ENCODE measurements at regions of chr12 and their contacts with region 1.

Region 1: DNA sequence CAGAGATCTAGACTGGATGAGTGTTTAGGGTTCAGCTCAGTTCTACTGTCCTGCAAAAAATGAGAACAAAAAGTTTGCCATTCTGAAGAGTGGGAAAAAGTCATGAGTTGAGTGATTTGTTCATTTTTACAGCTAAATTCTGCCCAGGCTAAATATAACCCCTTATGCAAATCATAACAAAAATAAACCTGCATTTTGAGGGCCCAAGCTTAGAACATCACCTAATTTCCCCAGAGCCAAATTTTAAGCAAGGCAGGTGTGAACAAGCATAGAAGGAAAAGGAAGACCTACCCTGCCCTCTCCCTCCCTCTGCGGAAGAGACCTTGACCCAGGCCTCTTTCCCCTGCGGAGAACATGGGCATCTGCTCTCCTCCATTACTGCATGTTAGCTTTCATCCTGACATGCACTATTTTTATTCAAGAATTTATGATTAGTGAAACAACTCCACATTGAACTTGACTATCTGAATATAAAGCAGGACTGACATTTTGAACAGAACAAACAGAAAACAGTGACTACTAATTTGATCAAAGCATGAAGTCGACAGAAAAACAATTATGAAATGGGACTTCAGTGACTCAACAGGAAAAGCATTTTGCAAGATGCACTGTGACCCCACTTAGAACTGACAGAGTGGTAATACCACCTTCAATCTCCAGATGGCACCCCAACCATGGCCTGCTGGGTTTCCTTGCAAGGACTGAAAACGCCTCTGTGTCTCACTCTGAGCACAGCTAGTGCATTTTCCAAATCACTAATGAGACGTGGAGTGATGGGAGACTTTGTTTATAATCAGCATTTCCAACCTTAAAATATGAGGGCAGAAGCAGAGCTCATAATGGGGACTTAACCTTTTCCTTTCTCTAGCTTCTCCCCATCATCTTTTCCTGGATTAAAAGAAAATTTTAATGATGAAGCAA is 30.9 kb upstream of the SELPLG start:
- DNase-seq: peak; percentile 84 to 92
- ATAC-seq: peak; percentile 86 to 97
- H3K4me3 ChIP-seq: peak overlapping the region in 1 of 4 donors; percentile 12
- H3K27ac ChIP-seq: peak overlapping the region; percentile 79 to 84 (median 84)
- H3K4me1 ChIP-seq: peaks cover 51 to 57% of the 10 kb centered on the region in 2 donors
- H3K27me3 ChIP-seq: no peaks in the 10 kb centered on the region
- CTCF ChIP-seq: peak; percentile 93 to 98 (median 95)
- POLR2A ChIP-seq: no peak

Region 2: DNA sequence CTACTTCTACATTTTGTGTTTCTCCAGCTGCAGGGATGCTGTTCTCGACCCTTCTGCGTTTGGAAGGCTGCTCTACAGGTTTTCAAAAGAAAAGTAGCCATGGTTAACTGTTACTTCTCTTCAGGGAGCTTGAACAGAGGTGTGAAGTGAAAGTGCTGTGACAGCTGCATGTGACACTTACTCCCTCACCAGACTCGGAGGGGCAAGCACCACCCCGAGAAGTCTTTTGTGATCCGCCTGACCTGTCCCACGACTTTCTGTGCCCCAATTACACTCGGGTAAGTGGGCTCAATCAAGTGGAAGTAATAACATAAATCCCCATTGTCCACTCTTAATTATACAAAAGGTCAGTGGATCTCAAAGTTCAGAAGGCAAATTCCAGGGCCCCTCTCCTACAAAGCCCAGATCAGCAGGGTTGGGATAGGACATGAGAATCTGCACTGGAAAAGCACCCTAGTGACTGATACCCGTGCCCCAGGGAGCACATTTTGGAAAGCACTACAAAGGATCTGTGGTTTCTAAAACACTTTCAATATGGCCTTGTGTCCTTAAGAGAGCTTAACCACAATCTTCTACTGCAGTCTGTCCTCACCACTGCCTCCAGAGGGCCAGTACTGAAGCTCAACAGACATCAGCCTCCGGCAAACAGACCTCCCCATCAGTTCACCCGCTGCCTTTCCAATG is 138.0 kb before region 1 on chr12:
- in situ Hi-C with region 1: no loop called
- intact Hi-C with region 1: no loop called
- DNase-seq: no peak
- ATAC-seq: no peak
- H3K4me3 ChIP-seq: no peak overlapping the region
- H3K27ac ChIP-seq: no peak overlapping the region
- H3K4me1 ChIP-seq: peaks cover 0 to 1% of the 10 kb centered on the region in 2 donors
- H3K27me3 ChIP-seq: no peaks in the 10 kb centered on the region
- CTCF ChIP-seq: no peak
- POLR2A ChIP-seq: no peak

Region 3: DNA sequence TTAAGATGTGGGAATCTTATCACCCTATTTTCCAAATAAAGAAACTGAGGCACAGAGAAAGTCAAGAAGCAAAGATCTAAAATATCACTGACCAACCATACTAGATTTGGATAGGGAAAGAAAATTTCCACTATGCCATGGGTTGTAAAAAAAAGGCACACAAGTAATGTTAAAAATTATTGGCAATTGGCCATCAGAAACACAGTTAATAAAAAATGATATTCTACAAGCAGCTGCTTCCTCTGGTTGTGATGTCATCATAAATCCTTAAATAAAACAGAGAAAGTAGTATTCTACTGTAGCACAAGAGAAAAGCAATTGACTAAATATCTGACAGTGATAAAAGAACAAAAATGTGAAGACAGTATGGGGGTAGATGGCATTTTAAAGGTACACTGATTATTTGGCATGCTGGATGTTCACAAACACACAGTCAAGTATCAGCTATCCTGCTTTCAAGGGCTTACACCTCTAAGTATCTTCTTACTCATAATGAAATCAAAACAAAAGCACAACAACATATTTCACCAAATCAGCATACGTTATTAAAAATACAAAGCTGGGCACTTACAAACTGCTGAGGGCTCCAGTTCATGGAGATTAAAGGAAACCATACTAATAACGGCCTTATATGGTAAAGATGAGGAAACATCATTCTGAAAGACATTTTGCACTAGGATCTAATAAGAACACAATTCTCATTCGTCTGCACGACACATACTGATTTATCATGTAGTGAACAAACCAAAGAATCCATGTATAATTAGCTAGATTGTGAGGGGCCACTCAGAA is 21.1 kb after region 1 on chr12:
- in situ Hi-C with region 1: no loop called
- intact Hi-C with region 1: loop called (anchors 2 kb)
- DNase-seq: no peak
- ATAC-seq: no peak
- H3K4me3 ChIP-seq: no peak overlapping the region
- H3K27ac ChIP-seq: peak overlapping the region; percentile 92 to 98 (median 96)
- H3K4me1 ChIP-seq: peaks cover 83 to 88% of the 10 kb centered on the region in 2 donors
- H3K27me3 ChIP-seq: no peaks in the 10 kb centered on the region
- CTCF ChIP-seq: no peak
- POLR2A ChIP-seq: no peak

Region 4: DNA sequence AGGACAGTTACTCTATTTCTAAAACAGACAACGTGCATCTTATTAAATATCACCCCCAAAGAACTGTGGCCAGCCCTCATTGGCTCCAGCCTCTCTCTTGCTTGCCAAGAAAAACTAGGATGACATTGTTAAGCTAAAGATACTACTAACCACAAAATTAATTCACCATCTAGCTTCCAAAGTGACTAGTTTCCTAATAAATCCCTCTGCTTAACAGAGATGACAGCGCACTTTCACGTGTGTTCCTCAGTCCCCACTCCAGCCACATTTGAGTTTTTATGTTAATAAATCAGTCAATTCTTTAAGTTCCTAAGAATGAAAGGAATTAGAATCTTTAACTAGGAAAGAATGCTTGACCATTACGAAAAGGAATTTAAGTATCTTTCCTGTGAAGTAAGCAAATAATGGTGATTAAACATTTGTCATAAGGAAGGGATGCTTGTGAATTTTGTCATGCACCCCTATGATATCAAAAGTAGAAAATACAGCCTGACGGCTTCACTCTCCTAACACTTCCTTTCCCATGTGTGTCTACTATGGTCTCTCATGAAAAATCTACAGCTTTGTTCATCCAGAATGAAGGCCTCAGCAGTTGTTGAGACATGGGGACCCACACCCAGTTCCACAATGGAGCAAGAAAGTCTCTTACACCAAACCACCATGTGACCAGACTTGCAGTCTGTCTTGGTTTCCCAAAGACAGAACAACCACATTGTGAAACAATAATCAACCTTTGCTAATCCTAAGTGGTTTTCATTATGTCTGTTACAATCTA is 58.6 kb after region 1 on chr12:
- in situ Hi-C with region 1: loop called in 1 of 4 experiments (anchors 10 kb)
- intact Hi-C with region 1: no loop called
- DNase-seq: peak in 1 of 2 donors; percentile 64
- ATAC-seq: peak; percentile 61 to 85
- H3K4me3 ChIP-seq: peak overlapping the region in 2 of 4 donors; percentile 7 to 12
- H3K27ac ChIP-seq: peak overlapping the region; percentile 85 to 100 (median 98)
- H3K4me1 ChIP-seq: peaks cover 72 to 86% of the 10 kb centered on the region in 2 donors
- H3K27me3 ChIP-seq: no peaks in the 10 kb centered on the region
- CTCF ChIP-seq: no peak
- POLR2A ChIP-seq: peak in 1 of 2 donors; percentile 12

Region 5: DNA sequence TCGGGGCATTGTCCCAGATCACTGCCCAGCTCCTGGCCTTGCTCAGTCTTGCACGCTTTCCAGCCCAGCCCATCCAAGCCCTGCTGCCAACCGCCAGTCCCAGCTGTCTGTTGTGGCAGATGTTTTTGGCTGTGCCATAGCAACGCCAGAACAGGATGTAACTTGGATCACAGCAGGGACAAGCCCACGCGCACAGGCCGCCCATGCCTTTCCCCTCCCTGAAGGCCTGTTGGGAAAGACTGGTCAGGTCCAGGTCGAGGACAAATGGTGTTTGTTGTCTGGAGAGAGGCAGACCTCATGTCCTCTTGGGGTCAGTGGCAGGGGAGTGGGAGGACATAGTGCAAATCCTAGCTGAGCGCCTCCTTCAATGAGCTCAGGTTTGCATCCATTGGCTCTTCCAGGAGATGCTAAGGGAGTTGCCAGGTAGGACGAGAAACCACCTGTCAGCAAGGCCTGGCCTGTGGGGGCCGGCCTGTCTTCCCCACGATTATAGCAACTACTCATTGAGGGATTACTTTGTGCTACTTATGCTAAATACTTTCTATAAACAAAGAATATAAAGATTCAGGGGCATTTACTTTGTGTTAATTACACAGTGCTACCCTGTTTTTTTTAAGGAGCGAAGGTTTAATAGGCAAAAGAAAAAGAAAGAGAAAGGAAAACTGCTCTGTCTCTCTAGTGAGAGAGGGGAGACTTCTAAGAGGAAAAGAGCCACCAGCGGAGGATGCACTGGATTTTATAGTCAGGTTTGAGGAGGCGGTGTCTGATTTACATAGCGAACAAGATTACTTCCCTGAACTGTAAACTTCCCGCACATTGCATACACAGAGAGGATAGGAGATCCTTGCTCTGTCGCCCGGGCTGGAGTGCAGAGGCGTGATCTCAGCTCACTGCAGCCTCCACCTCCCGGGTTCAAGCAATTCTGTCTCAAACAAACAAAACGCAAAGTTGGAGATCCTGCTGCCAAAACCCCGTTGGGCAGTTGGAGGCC is 109.5 kb after region 1 on chr12:
- in situ Hi-C with region 1: no loop called
- intact Hi-C with region 1: no loop called
- DNase-seq: peak; percentile 88 to 94
- ATAC-seq: peak; percentile 86 to 90
- H3K4me3 ChIP-seq: no peak overlapping the region
- H3K27ac ChIP-seq: peak overlapping the region; percentile 80 to 86 (median 84)
- H3K4me1 ChIP-seq: peaks cover 36 to 45% of the 10 kb centered on the region in 2 donors
- H3K27me3 ChIP-seq: no peaks in the 10 kb centered on the region
- CTCF ChIP-seq: no peak
- POLR2A ChIP-seq: peak; percentile 8 to 27

Region 6: GRCh38 chr12:108803428-108804105 is 139.0 kb after region 1 on chr12:
- in situ Hi-C with region 1: loop called (anchors 5 to 10 kb)
- intact Hi-C with region 1: loop called (anchors 1 kb)
- DNase-seq: peak; percentile 69 to 80
- ATAC-seq: peak; percentile 61 to 70
- H3K4me3 ChIP-seq: peak overlapping the region in 1 of 4 donors; percentile 11
- H3K27ac ChIP-seq: peak overlapping the region; percentile 93 to 97 (median 96)
- H3K4me1 ChIP-seq: peaks cover 62% of the 10 kb centered on the region in 2 donors
- H3K27me3 ChIP-seq: no peaks in the 10 kb centered on the region
- CTCF ChIP-seq: peak; percentile 93 to 97 (median 95)
- POLR2A ChIP-seq: peak in 1 of 2 donors; percentile 11

Region 7: DNA sequence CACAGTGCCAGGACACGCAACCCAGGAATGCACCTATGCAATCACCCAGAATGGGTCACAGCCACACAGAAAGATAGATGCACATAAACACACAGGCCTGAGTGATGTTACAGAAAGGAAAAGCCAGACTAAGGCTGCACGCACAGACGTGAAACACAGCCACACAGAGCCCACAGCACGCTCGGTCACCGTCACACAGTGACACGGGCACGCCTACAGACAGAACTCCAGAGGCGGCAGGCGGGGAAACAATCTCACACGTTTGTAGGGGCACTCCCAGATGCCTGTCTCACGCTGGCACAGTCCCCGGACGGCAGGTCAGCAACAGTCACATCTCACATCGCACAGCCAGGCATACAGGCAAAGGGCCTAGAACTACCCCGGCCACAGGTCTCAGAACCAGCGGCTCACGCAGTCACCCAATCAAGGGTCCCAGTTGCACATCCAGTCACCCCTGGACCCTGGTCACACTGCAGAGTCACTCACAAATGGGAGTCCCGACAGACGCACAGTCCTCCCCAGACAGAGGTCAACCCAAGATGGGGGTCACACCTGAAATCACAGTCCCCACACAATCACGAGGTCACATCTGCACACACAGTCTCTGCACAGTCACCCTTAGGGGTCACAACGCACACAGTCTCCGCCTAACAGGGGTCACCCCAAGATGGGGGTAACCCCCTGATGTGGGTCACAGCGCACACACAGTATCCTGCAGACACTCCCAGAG is 192.0 kb after region 1 on chr12:
- in situ Hi-C with region 1: loop called in 1 of 4 experiments (anchors 10 kb)
- intact Hi-C with region 1: loop called (anchors 1 kb)
- DNase-seq: peak; percentile 70 to 91
- ATAC-seq: peak; percentile 28 to 39
- H3K4me3 ChIP-seq: peak overlapping the region; percentile 64 to 97 (median 86)
- H3K27ac ChIP-seq: peak overlapping the region; percentile 90 to 98 (median 96)
- H3K4me1 ChIP-seq: peaks cover 52 to 61% of the 10 kb centered on the region in 2 donors
- H3K27me3 ChIP-seq: no peaks in the 10 kb centered on the region
- CTCF ChIP-seq: no peak
- POLR2A ChIP-seq: peak; percentile 48 to 58

Region 8: DNA sequence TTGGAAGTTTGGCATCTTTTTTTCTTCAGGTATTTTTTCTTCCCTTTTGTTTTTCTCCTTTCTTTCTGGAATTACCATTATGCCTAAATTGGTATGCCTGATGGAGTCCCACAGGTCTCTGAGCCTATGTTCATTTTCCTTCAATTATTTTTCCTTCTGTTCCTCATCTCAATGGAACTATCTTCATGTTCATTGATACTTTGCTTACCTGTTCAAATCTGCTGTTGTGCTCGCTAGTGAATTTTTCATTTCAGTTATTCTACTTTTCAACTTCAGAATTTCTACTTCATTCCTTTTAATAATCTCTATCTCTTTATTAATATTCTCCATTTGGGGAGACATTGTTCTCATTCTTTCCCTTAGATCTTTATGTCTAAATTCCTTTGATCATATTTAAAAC is 372.4 kb after region 1 on chr12:
- in situ Hi-C with region 1: no loop called
- intact Hi-C with region 1: no loop called
- DNase-seq: no peak
- ATAC-seq: no peak
- H3K4me3 ChIP-seq: no peak overlapping the region
- H3K27ac ChIP-seq: no peak overlapping the region
- H3K4me1 ChIP-seq: peaks cover 9 to 15% of the 10 kb centered on the region in 2 donors
- H3K27me3 ChIP-seq: no peaks in the 10 kb centered on the region
- CTCF ChIP-seq: no peak
- POLR2A ChIP-seq: no peak

Region 9: DNA sequence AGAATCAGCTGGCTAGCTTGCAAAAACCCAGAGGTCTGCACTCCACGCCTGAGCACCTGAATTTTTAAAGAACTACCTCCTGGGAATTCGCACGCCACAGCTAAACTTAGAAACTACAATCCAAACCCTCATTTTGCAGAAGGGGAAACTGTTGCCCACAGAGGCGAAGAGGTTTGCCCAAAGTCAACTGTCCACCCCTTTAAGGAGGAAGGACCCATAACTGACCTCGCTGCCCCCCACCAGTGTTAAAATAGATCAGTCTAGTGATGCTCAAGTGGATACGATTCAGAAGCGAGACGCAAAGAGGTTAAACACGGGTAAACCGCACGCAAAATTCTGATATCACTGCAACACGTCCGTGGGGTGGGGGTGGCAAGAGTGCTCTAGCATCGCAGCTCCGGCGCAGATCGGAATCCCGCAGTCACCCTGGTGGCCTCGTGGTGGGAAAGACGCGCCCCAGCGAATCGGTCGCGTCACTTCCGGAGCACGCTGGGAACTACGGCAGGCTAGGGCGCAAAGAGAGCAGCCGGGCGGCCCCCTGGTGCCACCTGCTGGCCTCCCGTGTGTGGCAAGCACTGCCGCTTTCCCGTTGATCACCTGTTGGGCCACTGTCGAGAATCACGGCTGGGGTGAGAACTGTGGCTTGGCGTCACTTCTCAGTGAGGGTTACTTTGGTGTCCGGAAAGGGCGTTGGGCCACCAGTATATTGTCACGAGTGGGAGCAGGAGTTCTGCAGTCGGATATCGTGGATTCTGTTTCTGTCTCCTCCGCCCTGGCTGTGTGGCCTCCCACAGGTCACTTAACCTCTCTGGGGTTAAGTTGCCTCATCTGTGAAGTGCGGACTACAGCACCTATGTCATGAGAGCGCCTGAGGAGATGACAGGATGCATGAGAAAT is 428.7 kb after region 1 on chr12 and contains the start of gene ALKBH2:
- in situ Hi-C with region 1: loop called in 1 of 4 experiments (anchors 25 kb)
- intact Hi-C with region 1: no loop called
- DNase-seq: peak; percentile 89 to 92
- ATAC-seq: peak; percentile 69 to 72
- H3K4me3 ChIP-seq: peak within 1 kb of the TSS; percentile 61 to 93 (median 64)
- H3K27ac ChIP-seq: peak within 1 kb of the TSS; percentile 79 to 88 (median 81)
- H3K4me1 ChIP-seq: peaks cover 22 to 23% of the 10 kb centered on the region in 2 donors
- H3K27me3 ChIP-seq: no peaks in the 10 kb centered on the region
- CTCF ChIP-seq: peak; percentile 93 to 99 (median 97)
- POLR2A ChIP-seq: peak; percentile 52 to 77
- total RNA-seq, gene ALKBH2: 8.7 to 22.5 (median 18.2) TPM